PC-3 (cell line): ENCODE measurements at regions of chr2 and their contacts with region 1.

Region 1: DNA sequence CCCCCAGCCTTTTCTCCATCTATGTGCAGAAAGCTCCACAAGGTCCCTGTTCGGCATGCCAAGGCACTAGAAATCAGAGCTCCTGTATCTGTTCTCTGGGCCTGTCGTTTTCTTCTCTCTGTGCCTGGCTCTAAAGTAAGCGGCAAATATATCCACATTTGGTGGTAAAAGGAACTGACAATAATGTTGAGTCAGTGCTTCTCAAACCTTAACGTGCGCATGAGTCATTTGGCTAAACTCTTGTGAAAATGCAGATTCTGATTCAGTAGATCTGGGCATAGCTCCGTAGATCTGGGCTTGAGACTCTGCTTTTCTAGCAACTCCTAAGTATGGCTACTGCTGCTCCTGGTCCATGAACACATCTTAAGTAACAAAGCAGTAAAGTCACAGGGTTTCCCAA is 16.5 kb upstream of the ACSL3 start:
- DNase-seq: peak; percentile 95
- ATAC-seq: peak; percentile 67
- H3K4me3 ChIP-seq: peak overlapping the region; percentile 52
- H3K27ac ChIP-seq: peak overlapping the region; percentile 90
- H3K4me1 ChIP-seq: peaks cover 68% of the 10 kb centered on the region
- H3K27me3 ChIP-seq: no peaks in the 10 kb centered on the region
- CTCF ChIP-seq: no peak

Region 2: DNA sequence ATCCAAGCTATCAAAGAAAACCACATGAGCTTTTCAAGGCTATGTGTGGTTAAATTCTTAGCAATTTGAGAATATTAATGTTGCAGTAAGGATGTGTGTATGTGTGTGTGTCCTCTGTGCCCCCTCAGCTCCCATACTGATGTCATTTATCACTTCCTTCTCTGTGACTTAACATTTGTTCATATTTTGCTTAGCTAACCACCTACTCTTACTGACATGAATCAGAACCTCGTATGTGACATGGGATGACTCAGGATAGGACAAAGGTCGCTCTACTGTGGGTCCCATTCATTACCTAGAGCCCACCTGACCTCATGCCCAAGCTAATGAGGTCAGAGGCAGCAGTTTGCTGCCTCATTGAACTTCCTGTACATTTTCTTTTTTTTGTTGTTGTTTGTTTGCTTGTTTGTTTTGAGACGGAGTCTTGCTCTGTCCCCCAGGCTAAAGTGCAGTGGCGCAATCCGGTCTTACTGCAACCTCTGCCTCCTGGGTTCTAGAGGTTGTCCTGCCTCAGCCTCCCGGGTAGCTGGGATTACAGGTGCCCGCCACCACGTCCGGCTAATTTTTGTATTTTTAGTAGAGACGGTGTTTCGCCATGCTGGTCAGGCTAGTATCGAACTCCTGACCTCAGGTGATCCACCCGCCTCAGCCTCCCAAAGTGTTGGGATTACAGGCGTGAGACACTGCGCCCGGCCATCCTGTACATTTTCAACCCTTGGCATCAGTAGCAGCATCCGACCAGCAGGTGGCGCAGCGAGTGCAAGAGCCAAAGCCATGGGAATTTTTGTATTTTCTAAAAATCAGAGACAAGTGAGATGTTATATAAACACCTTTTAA is 136.4 kb before region 1 on chr2:
- CTCF ChIA-PET with region 1: interaction called, 3 read pairs
- POLR2A ChIA-PET with region 1: no interaction called
- intact Hi-C with region 1: loop called (anchors 5 kb)
- DNase-seq: peak; percentile 80
- ATAC-seq: peak; percentile 68
- H3K4me3 ChIP-seq: no peak overlapping the region
- H3K27ac ChIP-seq: peak overlapping the region; percentile 43
- H3K4me1 ChIP-seq: peaks cover 22% of the 10 kb centered on the region; the same call in 1 of the 2 replicates
- H3K27me3 ChIP-seq: no peaks in the 10 kb centered on the region
- CTCF ChIP-seq: peak; percentile 88